GM12878 (cell line): ENCODE measurements at regions of chr12 and their contacts with region 1.

Region 1: DNA sequence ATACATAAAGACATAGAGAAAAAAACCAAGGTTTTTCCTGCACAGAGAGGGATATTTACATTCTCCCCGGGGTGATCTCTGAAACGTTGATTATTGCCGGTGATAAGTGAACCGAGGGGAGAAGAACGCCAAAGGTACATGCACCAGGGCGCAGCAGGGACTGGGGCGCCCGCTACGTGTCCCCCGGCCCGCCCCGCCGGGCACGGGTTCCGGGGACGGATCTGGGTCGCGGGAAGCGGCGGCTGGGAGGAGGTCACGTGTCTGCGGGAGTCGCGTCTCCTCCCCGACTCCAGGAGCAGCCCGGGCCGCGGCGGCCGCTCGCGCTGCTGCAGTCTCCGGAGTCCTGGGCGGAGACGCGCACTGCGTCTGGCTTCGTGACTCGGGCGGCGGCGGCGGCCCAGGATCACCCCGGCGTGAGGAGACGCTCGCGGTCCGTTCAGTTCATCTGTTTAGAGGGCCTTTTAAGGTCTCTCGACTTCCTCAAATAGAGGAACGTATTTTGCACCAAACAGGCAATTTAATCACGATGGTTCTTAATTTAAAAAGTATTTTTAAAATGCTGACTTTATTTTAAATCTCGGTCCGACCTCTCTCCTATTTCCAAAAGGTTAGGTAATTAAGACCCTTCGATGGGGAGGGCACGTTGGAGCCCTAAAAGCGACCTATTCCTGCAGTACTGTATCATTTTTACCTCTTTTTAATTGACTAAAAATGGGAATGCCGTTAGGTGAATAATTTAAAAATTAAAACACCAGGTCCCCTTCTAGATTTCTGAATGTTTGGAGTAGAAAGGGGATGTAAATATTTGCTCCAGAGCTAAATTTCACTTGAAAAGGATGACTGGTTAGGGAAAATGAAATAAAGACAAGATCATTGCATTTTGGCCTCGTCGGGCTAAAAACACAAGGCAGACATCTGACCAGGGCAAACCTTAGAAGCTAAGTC is 1.8 kb upstream of the BHLHE41 start:
- DNase-seq: no peak
- ATAC-seq: peak; percentile 73
- H3K4me3 ChIP-seq: peak overlapping the region; percentile 80
- H3K27ac ChIP-seq: no peak overlapping the region
- H3K4me1 ChIP-seq: peaks cover 20% of the 10 kb centered on the region
- H3K27me3 ChIP-seq: peaks cover 10 to 41% of the 10 kb centered on the region in 2 experiments
- CTCF ChIP-seq: no peak
- EP300 ChIP-seq: no peak
- POLR2A ChIP-seq: no peak
- RAD21 ChIP-seq: no peak

Region 2: GRCh38 chr12:26264215-26264838 is 137.7 kb after region 1 on chr12:
- CTCF ChIA-PET with region 1: interaction called, 6 read pairs
- POLR2A ChIA-PET with region 1: no interaction called
- RAD21 ChIA-PET with region 1: interaction called, 3 read pairs
- SMC1A ChIA-PET with region 1: interaction called, 13 read pairs
- in situ Hi-C with region 1: no loop called
- intact Hi-C with region 1: no loop called
- DNase-seq: no peak
- ATAC-seq: no peak
- H3K4me3 ChIP-seq: no peak overlapping the region
- H3K27ac ChIP-seq: no peak overlapping the region
- H3K4me1 ChIP-seq: no peaks in the 10 kb centered on the region
- H3K27me3 ChIP-seq: no peaks in the 10 kb centered on the region; a peak in 2 of 4 replicates
- CTCF ChIP-seq: no peak
- EP300 ChIP-seq: no peak
- POLR2A ChIP-seq: no peak
- RAD21 ChIP-seq: no peak

Region 3: GRCh38 chr12:26298785-26299621 is 172.4 kb after region 1 on chr12:
- CTCF ChIA-PET with region 1: interaction called, 7 read pairs
- POLR2A ChIA-PET with region 1: no interaction called
- RAD21 ChIA-PET with region 1: interaction called, 15 read pairs
- SMC1A ChIA-PET with region 1: interaction called, 14 read pairs
- in situ Hi-C with region 1: no loop called
- intact Hi-C with region 1: no loop called
- DNase-seq: peak; percentile 91
- ATAC-seq: peak; percentile 98
- H3K4me3 ChIP-seq: 0 out of 2 replicates have a peak overlapping the region, but pooled peaks have one; percentile 4
- H3K27ac ChIP-seq: peak overlapping the region; percentile 61; the same call in 1 of the 2 replicates
- H3K4me1 ChIP-seq: peaks cover 20% of the 10 kb centered on the region
- H3K27me3 ChIP-seq: no peaks in the 10 kb centered on the region; a peak in 1 of 4 replicates
- CTCF ChIP-seq: no peak
- EP300 ChIP-seq: peak; percentile 95 to 98
- POLR2A ChIP-seq: no peak
- RAD21 ChIP-seq: 0 out of 2 replicates have a peak, but pooled peaks have one; percentile 24

Region 4: GRCh38 chr12:26318661-26319068 is 192.1 kb after region 1 on chr12:
- CTCF ChIA-PET with region 1: interaction called, 4 read pairs
- POLR2A ChIA-PET with region 1: no interaction called
- RAD21 ChIA-PET with region 1: interaction called, 3 read pairs
- SMC1A ChIA-PET with region 1: interaction called, 10 read pairs
- in situ Hi-C with region 1: no loop called
- intact Hi-C with region 1: no loop called
- DNase-seq: no peak
- ATAC-seq: peak; percentile 93
- H3K4me3 ChIP-seq: no peak overlapping the region
- H3K27ac ChIP-seq: no peak overlapping the region
- H3K4me1 ChIP-seq: peaks cover 14% of the 10 kb centered on the region
- H3K27me3 ChIP-seq: no peaks in the 10 kb centered on the region
- CTCF ChIP-seq: no peak
- EP300 ChIP-seq: peak in 1 of 2 experiments; percentile 35; a peak in 1 of 4 replicates
- POLR2A ChIP-seq: no peak
- RAD21 ChIP-seq: no peak

Region 5: DNA sequence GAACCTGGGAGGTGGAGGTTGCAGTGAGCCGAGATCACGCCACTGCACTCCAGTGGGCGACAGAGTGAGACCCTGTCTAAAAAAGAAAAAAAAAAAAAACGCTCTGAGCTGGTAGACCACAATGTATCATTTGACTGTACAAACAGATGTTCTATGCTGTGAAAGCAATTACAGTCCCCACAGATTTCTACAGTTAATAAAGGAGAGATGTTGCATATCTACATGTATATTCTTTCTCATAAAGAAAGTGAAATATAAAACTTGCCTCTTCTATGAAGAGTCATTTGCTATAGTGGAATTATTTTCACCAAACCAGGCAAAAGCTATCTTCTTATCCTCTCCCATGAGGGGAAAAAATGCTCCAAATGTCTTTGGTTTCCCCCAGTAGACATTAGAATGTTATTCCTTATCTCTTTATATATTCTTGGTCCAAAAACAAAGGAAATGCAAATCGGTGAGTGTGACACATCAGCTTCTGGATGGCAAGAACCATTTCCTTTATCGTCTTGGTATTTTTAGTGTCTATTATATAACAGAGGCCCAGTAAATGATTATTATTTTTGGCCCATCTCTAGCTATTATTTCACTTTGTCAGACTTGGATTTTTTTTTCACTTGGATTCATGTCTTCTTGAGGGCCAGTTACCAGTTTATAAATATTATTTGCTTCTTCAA is 299.1 kb after region 1 on chr12:
- CTCF ChIA-PET with region 1: interaction called, 5 read pairs
- POLR2A ChIA-PET with region 1: no interaction called
- RAD21 ChIA-PET with region 1: no interaction called
- SMC1A ChIA-PET with region 1: interaction called, 11 read pairs
- in situ Hi-C with region 1: no loop called
- intact Hi-C with region 1: no loop called
- DNase-seq: no peak
- ATAC-seq: peak; percentile 57
- H3K4me3 ChIP-seq: no peak overlapping the region
- H3K27ac ChIP-seq: no peak overlapping the region
- H3K4me1 ChIP-seq: no peaks in the 10 kb centered on the region
- H3K27me3 ChIP-seq: no peaks in the 10 kb centered on the region
- CTCF ChIP-seq: no peak
- EP300 ChIP-seq: no peak
- POLR2A ChIP-seq: no peak
- RAD21 ChIP-seq: no peak

Region 6: GRCh38 chr12:26434299-26435068 is 307.9 kb after region 1 on chr12:
- CTCF ChIA-PET with region 1: interaction called, 16 read pairs
- POLR2A ChIA-PET with region 1: no interaction called
- RAD21 ChIA-PET with region 1: no interaction called
- SMC1A ChIA-PET with region 1: interaction called, 7 read pairs
- in situ Hi-C with region 1: no loop called
- intact Hi-C with region 1: no loop called
- DNase-seq: no peak
- ATAC-seq: peak; percentile 92
- H3K4me3 ChIP-seq: no peak overlapping the region
- H3K27ac ChIP-seq: no peak overlapping the region
- H3K4me1 ChIP-seq: no peaks in the 10 kb centered on the region
- H3K27me3 ChIP-seq: no peaks in the 10 kb centered on the region
- CTCF ChIP-seq: peak; percentile 73 to 77 (median 75)
- EP300 ChIP-seq: no peak
- POLR2A ChIP-seq: no peak
- RAD21 ChIP-seq: peak; percentile 77